Sigmoid colon (tissue), 7 donors: ENCODE measurements at regions of chr7 and their contacts with region 1.

Region 1: DNA sequence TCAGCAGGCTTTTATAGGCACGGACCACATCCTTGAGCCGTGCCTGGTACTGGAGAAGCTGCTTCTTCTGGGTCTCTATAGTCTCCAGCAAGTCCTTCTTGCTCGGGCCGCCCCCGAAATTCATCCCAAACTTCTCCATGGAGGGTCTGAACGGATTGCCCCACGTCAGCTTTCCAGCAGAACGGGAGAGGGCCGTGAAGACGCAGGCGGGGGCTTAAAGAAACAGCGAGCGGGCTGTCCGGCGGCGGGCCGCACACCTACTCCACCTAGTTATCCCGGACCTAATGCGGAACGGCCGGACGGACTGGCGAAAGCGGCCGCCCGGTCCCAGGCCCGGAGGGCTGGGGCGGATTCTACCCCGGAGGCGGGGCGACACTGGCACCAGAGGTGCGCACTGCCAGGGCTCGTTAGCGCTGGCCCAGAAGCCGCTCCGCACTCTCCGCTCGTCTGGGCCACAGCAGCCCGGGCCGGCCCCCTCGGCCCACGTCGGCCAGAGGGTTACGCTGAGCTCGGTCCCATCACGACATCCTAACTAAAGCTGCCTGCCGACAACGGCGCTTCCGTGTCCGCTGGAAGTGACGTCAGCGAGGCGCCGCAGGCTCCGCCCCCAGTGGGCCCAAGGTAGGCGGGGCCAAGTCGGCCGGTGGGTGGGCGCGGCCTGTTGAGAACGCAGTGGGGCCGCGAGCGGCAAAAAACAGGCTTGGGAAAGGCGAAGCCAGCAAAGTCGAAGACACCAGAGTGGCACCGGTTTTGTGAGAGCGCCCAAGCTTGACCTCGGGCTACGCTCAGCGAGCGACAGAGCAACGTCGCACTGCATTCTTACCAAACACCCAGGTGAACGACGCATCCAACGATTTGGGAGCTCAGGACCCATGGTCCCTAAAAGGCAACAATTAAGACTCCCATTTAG is at the start of gene GCC1:
- DNase-seq: peak; percentile 96
- H3K4me3 ChIP-seq: peak within 1 kb of the TSS; percentile 83 to 91 (median 85)
- H3K27ac ChIP-seq: peak within 1 kb of the TSS; percentile 88 to 96 (median 92)
- H3K4me1 ChIP-seq: peaks cover 0 to 76% (median 67%) of the 10 kb centered on the region in 4 donors
- H3K27me3 ChIP-seq: no peaks in the 10 kb centered on the region
- CTCF ChIP-seq: no peak
- EP300 ChIP-seq: peak in 1 of 4 donors; percentile 28
- POLR2A ChIP-seq: peak; percentile 81 to 82
- total RNA-seq, gene GCC1: 8.7 to 13.8 (median 11.3) TPM

Region 2: DNA sequence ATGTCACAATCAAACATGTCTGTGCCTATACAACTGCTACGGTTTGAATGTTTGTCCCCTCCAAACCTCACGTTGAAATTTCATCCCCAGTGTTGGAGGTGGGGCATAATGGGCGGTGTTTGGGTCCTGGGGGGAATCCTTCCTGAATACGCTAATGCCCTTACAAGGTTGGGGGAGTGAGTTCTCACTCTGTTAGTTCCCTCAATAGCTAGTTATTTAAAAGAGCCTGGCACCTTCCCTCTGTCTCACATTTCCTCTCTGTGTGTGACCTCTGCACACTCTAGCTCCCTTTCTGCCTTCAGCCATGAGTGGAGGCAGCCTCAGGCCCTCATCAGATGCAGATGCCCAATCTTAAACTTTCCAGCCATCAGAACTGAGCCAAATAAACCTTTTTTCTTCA is 462.1 kb before region 1 on chr7:
- intact Hi-C with region 1: no loop called
- DNase-seq: no peak
- H3K4me3 ChIP-seq: no peak overlapping the region
- H3K27ac ChIP-seq: no peak overlapping the region
- H3K4me1 ChIP-seq: no peaks in the 10 kb centered on the region
- H3K27me3 ChIP-seq: no peaks in the 10 kb centered on the region
- CTCF ChIP-seq: no peak
- EP300 ChIP-seq: no peak
- POLR2A ChIP-seq: no peak

Region 3: GRCh38 chr7:127392566-127393367 is 192.5 kb before region 1 on chr7 and contains the start of gene ZNF800:
- intact Hi-C with region 1: loop called (anchors 2 kb)
- DNase-seq: peak; percentile 96
- H3K4me3 ChIP-seq: peak within 1 kb of the TSS; percentile 72 to 98 (median 96)
- H3K27ac ChIP-seq: peak within 1 kb of the TSS; percentile 95 to 97 (median 97)
- H3K4me1 ChIP-seq: peaks cover 0 to 26% (median 23%) of the 10 kb centered on the region in 4 donors
- H3K27me3 ChIP-seq: no peaks in the 10 kb centered on the region
- CTCF ChIP-seq: no peak
- EP300 ChIP-seq: no peak
- POLR2A ChIP-seq: peak; percentile 81 to 85
- total RNA-seq, gene ZNF800: 29.2 to 39.1 (median 36.0) TPM

Region 4: GRCh38 chr7:127651556-127652332 is 66.4 kb after region 1 on chr7 and contains the start of gene SND1:
- intact Hi-C with region 1: loop called (anchors 1 kb)
- DNase-seq: peak; percentile 100
- H3K4me3 ChIP-seq: peak within 1 kb of the TSS; percentile 56 to 93 (median 72)
- H3K27ac ChIP-seq: peak within 1 kb of the TSS; percentile 88 to 94 (median 92)
- H3K4me1 ChIP-seq: peaks cover 0 to 46% (median 32%) of the 10 kb centered on the region in 4 donors
- H3K27me3 ChIP-seq: no peaks in the 10 kb centered on the region
- CTCF ChIP-seq: no peak
- EP300 ChIP-seq: peak in 2 of 4 donors; percentile 6 to 30
- POLR2A ChIP-seq: peak; percentile 42 to 72
- total RNA-seq, gene SND1: 63.5 to 83.1 (median 74.2) TPM

Region 5: GRCh38 chr7:127959770-127960169 is 374.5 kb after region 1 on chr7:
- intact Hi-C with region 1: loop called (anchors 5 kb)
- DNase-seq: no peak
- H3K4me3 ChIP-seq: no peak overlapping the region
- H3K27ac ChIP-seq: no peak overlapping the region
- H3K4me1 ChIP-seq: peaks cover 0 to 22% (median 5%) of the 10 kb centered on the region in 4 donors
- H3K27me3 ChIP-seq: no peaks in the 10 kb centered on the region
- CTCF ChIP-seq: no peak
- EP300 ChIP-seq: no peak
- POLR2A ChIP-seq: no peak

Region 6: GRCh38 chr7:128031901-128032604 is 446.8 kb after region 1 on chr7:
- intact Hi-C with region 1: loop called (anchors 10 kb)
- DNase-seq: peak; percentile 73
- H3K4me3 ChIP-seq: peak overlapping the region; percentile 35 to 62 (median 54)
- H3K27ac ChIP-seq: peak overlapping the region in 2 of 4 donors; percentile 57 to 62
- H3K4me1 ChIP-seq: peaks cover 3 to 29% (median 17%) of the 10 kb centered on the region in 4 donors
- H3K27me3 ChIP-seq: no peaks in the 10 kb centered on the region
- CTCF ChIP-seq: peak in 1 of 4 experiments; percentile 25
- EP300 ChIP-seq: no peak
- POLR2A ChIP-seq: no peak

Region 7: DNA sequence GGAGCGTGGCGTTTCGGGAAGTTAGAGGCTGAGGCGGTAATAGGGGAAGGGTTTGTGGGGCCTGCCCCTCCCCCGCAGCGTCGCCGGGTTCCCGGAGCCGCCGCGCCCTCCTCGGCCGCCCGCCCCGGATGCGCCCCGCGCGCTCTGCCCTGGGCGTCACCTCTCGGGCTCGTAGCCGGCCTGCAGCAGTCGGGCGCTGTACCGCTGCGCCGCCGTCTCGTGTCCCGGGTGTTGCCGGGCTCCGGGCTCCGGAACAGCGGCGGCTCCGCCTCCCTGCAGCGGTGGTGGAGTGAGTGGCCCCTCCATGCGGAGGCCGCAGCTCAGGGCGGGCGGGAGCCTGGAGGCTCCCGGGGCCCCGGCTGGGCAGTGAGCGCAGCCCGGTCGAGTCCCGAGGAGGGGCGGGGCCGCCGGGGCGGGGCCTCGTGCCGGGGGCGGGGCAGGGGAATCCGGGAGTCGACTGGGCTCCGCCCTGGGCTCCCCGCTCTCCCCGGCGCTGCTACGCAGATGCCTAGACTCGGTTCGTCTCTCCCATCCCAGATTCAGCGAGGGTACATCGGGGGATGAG is 824.4 kb after region 1 on chr7 and contains the start of gene IMPDH1:
- intact Hi-C with region 1: loop called (anchors 5 kb)
- DNase-seq: peak; percentile 96
- H3K4me3 ChIP-seq: peak within 1 kb of the TSS; percentile 57 to 73 (median 64)
- H3K27ac ChIP-seq: peak within 1 kb of the TSS; percentile 91 to 94 (median 94)
- H3K4me1 ChIP-seq: peaks cover 0 to 48% (median 39%) of the 10 kb centered on the region in 4 donors
- H3K27me3 ChIP-seq: no peaks in the 10 kb centered on the region
- CTCF ChIP-seq: no peak
- EP300 ChIP-seq: no peak
- POLR2A ChIP-seq: peak in 1 of 2 donors; percentile 52
- total RNA-seq, gene IMPDH1: 23.5 to 36.3 (median 28.7) TPM